ENCODE measurements at regions of chr2 and their contacts with region 1.

Region 1: GRCh38 chr2:228657807-228658402 is 476.4 kb upstream of the SPHKAP start:
- ATAC-seq: peak in 3 of 8 experiments; percentile 40 to 63 (median 55)
- H3K4me3 ChIP-seq: no peak overlapping the region
- H3K27ac ChIP-seq: no peak overlapping the region
- H3K4me1 ChIP-seq: no peaks in the 10 kb centered on the region

Region 2: DNA sequence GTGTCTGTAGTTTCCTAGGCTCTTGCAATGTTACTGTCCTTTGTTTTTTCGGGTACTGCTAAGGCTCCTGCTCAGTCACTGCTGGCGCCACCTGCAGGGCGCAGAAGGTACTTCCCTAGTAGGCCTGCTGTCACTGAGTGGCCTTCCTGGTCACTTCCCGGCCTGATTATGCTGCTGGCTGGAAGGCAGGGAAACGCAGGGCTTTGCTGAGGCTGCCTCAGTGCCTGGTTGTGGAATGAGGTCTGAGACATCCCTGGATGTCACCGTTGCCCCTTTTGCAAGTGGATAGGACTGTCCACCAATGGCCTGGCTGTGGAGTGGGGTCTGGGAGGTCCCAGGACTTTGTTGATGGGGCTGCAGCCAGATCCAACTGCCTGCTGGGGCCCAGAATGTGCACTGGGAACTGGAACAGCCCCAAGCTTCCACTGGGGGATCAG is 773.4 kb before region 1 on chr2:
- in situ Hi-C with region 1: loop called in 2 of 9 experiments (anchors 25 kb)
- ATAC-seq: peak in 5 of 8 experiments; percentile 47 to 98 (median 96)
- H3K4me3 ChIP-seq: no peak overlapping the region
- H3K27ac ChIP-seq: no peak overlapping the region
- H3K4me1 ChIP-seq: no peaks in the 10 kb centered on the region

Region 3: GRCh38 chr2:228048838-228049490 is 608.9 kb before region 1 on chr2:
- in situ Hi-C with region 1: loop called in 3 of 9 experiments (anchors 25 kb)
- ATAC-seq: peak; percentile 36 to 98 (median 60)
- H3K4me3 ChIP-seq: no peak overlapping the region
- H3K27ac ChIP-seq: no peak overlapping the region
- H3K4me1 ChIP-seq: no peaks in the 10 kb centered on the region

Region 4: DNA sequence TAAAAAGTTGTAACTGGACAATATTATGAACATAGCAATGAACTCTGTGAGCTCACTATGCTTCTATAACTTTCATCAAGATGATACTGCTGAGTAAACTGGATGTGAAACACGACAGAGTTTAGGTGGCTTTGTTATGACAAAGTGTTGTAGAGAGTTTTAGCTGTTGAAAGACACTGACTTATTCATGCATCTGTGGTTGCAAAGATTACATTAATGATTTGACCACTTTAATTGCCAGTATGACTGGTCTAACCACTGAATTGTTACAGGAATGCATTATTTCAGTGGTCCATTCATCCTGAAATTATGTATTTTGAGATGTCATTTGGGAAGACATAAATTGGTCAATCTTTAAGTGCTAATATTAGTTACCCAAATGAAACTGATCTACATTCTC is 594.3 kb before region 1 on chr2:
- in situ Hi-C with region 1: loop called in 1 of 9 experiments (anchors 25 kb)
- ATAC-seq: no peak
- H3K4me3 ChIP-seq: no peak overlapping the region
- H3K27ac ChIP-seq: no peak overlapping the region
- H3K4me1 ChIP-seq: peaks cover 0 to 6% of the 10 kb centered on the region in 2 donors

Region 5: DNA sequence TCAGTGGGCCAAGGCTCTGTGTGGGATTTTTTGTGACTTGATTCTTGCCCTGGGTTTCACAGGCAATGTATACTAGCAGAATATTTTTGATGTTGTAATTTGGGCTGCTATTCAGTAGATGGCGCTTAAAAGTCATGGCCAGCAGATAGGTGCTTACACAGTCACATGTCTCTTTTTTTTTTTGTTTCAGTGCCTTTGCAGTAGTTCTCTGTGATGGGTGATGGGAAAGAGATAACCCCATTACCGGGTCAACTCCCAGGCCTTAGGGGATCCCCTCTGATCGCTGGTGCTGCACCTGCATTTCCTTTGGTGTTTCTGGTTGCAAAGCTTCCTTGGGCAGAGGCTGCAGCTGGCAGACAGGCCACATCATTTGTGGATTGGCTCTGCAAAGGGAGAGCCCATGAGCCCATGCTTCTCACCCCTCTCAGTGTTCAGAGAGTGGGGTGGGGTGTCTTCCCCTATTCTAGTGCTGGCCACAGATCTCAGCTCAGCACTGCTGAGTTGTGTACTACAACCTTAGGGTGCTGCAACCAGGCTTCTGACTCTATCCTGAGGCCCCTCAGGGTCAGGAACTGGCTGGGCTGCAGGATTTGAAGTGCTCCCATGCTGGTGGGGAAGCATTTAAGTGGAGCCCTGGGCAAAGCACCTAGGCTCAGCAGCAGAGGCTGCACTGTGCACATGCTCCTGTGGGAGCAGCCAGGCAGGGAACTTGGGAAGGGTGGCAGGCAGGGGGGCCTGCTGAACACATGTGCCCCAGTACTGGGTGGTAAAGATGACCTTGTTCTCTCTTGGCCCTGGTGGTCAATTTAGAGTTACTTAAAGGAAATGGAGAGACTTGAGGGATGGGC is 256.6 kb before region 1 on chr2:
- in situ Hi-C with region 1: no loop called
- ATAC-seq: no peak
- H3K4me3 ChIP-seq: no peak overlapping the region
- H3K27ac ChIP-seq: no peak overlapping the region
- H3K4me1 ChIP-seq: no peaks in the 10 kb centered on the region